A549 (cell line): ENCODE measurements at regions of chr5 and their contacts with region 1.

Region 1: DNA sequence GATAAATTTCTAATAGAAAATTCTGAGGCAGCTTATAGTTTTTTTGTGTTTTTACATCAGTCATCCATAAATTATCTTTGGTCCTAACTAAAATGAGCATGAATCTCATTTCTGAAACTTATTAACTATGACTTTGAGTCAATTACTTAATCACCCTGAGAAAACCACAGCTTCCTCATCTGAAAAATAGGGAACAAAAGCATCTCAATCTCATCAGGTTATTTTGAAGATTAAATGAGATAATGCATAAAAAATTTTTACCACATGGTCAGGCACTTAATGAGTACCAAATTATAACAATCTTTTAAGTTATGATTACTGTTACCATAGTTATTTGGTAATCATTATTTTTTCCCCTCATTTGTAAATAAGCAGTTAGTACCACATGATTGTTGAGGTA is 279.1 kb downstream of the MAST4 start:
- DNase-seq: no peak
- ATAC-seq: no peak
- H3K4me3 ChIP-seq: no peak overlapping the region
- H3K27ac ChIP-seq: no peak overlapping the region
- H3K4me1 ChIP-seq: peaks cover 24% of the 10 kb centered on the region
- CTCF ChIP-seq: no peak
- EP300 ChIP-seq: no peak
- POLR2A ChIP-seq: no peak
- RAD21 ChIP-seq: no peak

Region 2: DNA sequence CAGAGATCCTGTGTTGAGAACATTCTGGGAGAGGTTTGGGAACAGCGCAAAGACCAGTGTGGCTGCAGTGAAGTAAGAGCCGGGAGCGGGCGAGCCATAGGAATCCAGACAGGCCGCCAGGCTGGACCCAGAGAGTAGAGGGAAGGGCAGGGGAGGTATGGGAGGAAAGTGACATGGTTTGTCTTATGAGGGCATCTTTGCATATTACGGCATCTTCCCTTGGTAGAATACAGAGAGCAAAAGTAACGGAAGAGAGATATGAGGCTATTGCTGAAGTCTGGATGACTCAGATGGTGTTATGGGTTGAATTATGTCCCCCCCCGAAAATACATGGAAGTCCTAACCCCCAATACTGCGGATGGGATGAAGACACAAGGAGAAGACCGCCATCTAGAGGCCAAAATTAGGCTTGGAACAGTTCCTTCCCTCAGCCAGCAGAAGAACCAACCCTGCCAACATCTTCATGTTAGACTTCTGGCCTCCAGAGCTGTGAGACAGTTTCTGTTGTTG is 10.9 kb before region 1 on chr5:
- CTCF ChIA-PET with region 1: interaction called, 28 read pairs
- POLR2A ChIA-PET with region 1: no interaction called
- DNase-seq: peak; percentile 14 to 67
- ATAC-seq: peak; percentile 83 to 95
- H3K4me3 ChIP-seq: no peak overlapping the region
- H3K27ac ChIP-seq: peak overlapping the region in 1 of 2 experiments; percentile 20; a peak in 1 of 6 replicates
- H3K4me1 ChIP-seq: 0 out of 3 replicates have a peak, but pooled peaks cover 4% of the 10 kb centered on the region
- CTCF ChIP-seq: peak; percentile 73
- EP300 ChIP-seq: no peak
- POLR2A ChIP-seq: no peak
- RAD21 ChIP-seq: peak; percentile 76 to 78